ENCODE measurements at regions of chr12 and their contacts with region 1.

Region 1: DNA sequence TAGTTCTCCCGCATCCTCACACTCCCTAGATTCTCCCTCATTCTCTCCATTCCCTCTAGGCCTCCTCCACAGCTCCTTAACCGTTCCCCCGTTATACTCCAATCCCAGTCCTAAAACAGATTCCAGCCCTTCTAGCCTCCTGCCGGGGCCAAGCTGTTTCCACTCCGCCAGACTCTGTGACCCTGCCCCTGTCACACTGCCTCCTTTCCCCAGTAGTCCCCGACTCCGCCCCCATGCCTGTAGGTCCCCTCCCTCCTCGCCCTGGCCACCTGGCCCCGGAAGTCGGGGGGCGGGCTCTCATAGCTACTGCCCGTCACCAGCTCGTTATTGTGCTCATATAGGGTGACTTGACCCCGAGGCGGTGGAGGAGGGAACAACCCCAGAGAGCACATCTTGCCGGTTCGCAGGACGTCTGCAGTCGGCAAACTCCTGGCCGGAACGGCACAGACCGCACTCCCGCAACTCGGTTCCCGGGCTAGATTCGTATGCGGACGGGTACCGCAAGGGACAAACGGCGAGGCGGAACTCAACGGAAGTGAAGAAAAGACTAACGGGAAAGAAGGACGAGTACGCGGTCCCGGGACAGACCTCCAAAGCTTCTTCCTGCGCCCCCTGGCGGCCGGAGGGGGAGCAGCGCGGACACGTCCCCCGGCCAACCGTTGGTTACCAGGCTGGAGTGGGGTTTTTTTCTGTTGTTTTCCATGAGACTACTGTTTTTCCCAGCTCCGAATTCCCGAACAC is at the start of gene AAAS:
- DNase-seq: peak; percentile 98
- ATAC-seq: peak; percentile 86
- H3K4me3 Mint-ChIP-seq: peak within 1 kb of the TSS; percentile 87
- H3K27ac Mint-ChIP-seq: peak within 1 kb of the TSS; percentile 95
- H3K4me1 Mint-ChIP-seq: peaks cover 39% of the 10 kb centered on the region
- H3K27me3 Mint-ChIP-seq: no peaks in the 10 kb centered on the region
- total RNA-seq, gene AAAS: 65.5 to 72.5 TPM

Region 2: GRCh38 chr12:53180220-53180930 is 140.9 kb before region 1 on chr12 and contains the starts of genes CSAD and ZNF740:
- CTCF ChIA-PET with region 1: interaction called, 11 read pairs
- POLR2A ChIA-PET with region 1: interaction called, 5 read pairs
- intact Hi-C with region 1: loop called (anchors 1 kb)
- DNase-seq: peak; percentile 99
- ATAC-seq: peak; percentile 94
- H3K4me3 Mint-ChIP-seq: peak within 1 kb of the TSS; percentile 98
- H3K27ac Mint-ChIP-seq: peak within 1 kb of the TSS; percentile 98
- H3K4me1 Mint-ChIP-seq: peaks cover 60% of the 10 kb centered on the region
- H3K27me3 Mint-ChIP-seq: no peaks in the 10 kb centered on the region
- total RNA-seq, gene CSAD: 20.0 to 23.1 TPM
- total RNA-seq, gene ZNF740: 34.9 to 40.2 TPM

Region 3: GRCh38 chr12:53220801-53221202 is 100.4 kb before region 1 on chr12:
- CTCF ChIA-PET with region 1: interaction called, 70 read pairs
- POLR2A ChIA-PET with region 1: interaction called, 3 read pairs
- intact Hi-C with region 1: loop called (anchors 1 to 10 kb)
- DNase-seq: peak; percentile 93
- ATAC-seq: peak; percentile 57
- H3K4me3 Mint-ChIP-seq: peak overlapping the region; percentile 83
- H3K27ac Mint-ChIP-seq: peak overlapping the region; percentile 87
- H3K4me1 Mint-ChIP-seq: peaks cover 78% of the 10 kb centered on the region
- H3K27me3 Mint-ChIP-seq: no peaks in the 10 kb centered on the region

Region 4: DNA sequence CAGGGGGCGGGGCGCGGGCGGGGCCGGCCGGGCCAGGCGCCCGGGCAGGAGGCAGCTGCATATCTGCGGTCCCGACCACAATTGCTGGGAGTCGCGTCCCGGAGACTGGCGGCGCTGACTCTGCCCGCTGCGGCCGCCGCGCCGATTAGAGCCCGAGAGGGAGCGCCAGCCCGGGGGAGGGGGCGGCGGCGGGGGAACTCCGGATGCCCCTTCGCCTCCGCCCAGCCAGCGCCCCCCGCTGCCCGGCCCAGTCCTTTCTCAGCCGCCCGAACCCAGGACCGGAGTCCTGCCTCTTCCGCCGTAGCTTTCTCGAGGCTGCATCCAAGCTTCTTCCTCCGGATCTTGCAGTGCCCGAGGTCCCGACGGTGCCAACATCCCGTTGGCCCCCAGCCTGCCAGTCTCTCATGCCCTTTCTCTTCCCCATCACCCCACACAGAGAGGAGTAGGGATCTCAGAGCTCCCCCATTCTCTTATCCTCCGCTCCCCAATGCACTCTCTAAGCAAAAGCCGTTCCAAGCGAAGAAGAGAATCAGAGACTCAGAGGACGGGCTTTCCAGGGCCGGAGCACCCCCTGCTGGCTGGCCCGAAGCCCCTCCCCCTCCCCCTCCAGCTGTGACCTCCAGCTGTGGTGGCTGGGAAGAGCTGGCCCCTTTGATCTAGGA is 23.7 kb after region 1 on chr12:
- CTCF ChIA-PET with region 1: interaction called, 77 read pairs
- POLR2A ChIA-PET with region 1: interaction called, 3 read pairs
- intact Hi-C with region 1: loop called (anchors 1 kb)
- DNase-seq: peak; percentile 88
- ATAC-seq: peak; percentile 85
- H3K4me3 Mint-ChIP-seq: peak overlapping the region; percentile 83
- H3K27ac Mint-ChIP-seq: peak overlapping the region; percentile 90
- H3K4me1 Mint-ChIP-seq: peaks cover 24% of the 10 kb centered on the region
- H3K27me3 Mint-ChIP-seq: peaks cover 2% of the 10 kb centered on the region

Region 5: GRCh38 chr12:53451661-53452158 is 130.5 kb after region 1 on chr12 and contains the start of gene PCBP2:
- CTCF ChIA-PET with region 1: interaction called, 8 read pairs
- POLR2A ChIA-PET with region 1: interaction called, 5 read pairs
- intact Hi-C with region 1: loop called in 1 of 2 experiments (anchors 1 kb)
- DNase-seq: peak; percentile 99
- ATAC-seq: peak; percentile 97
- H3K4me3 Mint-ChIP-seq: peak within 1 kb of the TSS; percentile 94
- H3K27ac Mint-ChIP-seq: peak within 1 kb of the TSS; percentile 96
- H3K4me1 Mint-ChIP-seq: peaks cover 27% of the 10 kb centered on the region
- H3K27me3 Mint-ChIP-seq: no peaks in the 10 kb centered on the region
- total RNA-seq, gene PCBP2: 881 to 999 TPM

Region 6: DNA sequence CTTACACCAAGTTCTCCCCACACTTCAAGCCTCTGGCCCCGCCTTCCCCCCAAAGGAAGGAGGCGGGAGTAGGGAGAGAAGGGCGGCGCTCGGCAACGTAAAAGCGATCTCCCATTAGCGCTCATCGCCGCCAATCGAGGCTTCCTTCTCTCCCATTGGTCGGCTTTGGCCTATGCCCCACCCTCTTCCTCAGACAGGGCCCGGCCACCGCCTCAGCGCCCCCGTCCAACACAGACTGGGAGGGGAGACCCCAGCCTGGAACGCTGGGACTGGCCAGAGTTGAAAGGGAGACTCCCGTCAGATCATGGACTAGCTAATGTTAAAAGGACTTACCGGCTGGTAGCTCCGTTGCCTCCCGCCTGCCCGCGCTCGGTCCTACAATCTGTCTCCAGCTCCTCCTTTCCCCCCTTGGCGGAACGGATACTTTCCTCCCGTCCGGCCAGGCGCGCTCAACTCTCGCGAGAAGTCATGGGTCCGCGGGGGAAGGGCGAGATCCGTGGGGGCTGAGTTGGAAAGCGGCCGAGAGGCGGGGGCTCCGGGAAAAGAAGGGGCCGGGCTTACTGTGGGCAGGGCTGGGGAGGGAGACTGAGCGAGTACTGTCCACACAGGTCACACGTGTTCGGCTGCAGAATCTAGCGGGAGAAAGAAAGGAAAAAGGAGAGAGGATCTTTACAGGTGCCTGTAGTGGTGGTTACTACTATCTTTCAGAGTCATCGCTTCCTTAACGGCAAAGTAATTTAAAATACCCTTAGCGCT is 304.9 kb after region 1 on chr12 and contains the start of gene ATF7:
- CTCF ChIA-PET with region 1: no interaction called
- POLR2A ChIA-PET with region 1: no interaction called
- intact Hi-C with region 1: loop called in 1 of 2 experiments (anchors 2 kb)
- DNase-seq: peak; percentile 99
- ATAC-seq: peak; percentile 96
- H3K4me3 Mint-ChIP-seq: peak within 1 kb of the TSS; percentile 95
- H3K27ac Mint-ChIP-seq: peak within 1 kb of the TSS; percentile 84
- H3K4me1 Mint-ChIP-seq: peaks cover 35% of the 10 kb centered on the region
- H3K27me3 Mint-ChIP-seq: no peaks in the 10 kb centered on the region
- total RNA-seq, gene ATF7: 23.0 to 28.1 TPM